ENCODE measurements at regions of chr12 and their contacts with region 1.

Region 1: DNA sequence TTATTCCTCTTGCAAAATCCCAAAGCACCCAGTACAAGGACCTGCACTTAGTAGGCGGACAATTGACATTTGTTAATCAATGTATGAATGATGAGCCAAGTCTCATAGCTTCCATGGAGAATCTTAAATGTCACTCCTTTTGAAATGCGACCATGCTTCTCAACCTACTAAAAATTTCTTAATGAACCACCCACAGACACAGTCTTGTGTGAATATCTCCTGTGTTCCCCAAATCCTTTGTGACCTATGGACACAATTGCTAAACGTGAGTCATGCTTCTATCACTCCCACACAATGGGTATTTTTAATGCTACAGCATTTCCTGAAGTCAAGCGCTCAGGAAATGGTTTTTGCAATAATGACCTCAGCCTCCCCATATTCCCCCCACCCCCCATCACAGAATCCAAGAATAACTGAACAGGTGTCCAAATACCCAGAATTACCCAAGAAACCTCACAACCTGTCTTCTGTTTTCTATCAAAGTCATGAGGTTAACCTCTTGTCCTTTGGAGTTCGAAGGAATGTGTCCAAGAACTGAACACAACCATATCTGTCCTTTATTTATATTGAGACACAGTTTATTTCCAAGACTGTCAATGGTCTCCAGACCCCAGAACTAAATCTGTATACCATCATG is 163.6 kb upstream of the PLEKHG7 start:
- DNase-seq: peak; percentile 56
- H3K4me3 Mint-ChIP-seq: no peak overlapping the region
- H3K27ac Mint-ChIP-seq: peak overlapping the region; percentile 90
- H3K4me1 Mint-ChIP-seq: peaks cover 63% of the 10 kb centered on the region
- H3K27me3 Mint-ChIP-seq: no peaks in the 10 kb centered on the region

Region 2: DNA sequence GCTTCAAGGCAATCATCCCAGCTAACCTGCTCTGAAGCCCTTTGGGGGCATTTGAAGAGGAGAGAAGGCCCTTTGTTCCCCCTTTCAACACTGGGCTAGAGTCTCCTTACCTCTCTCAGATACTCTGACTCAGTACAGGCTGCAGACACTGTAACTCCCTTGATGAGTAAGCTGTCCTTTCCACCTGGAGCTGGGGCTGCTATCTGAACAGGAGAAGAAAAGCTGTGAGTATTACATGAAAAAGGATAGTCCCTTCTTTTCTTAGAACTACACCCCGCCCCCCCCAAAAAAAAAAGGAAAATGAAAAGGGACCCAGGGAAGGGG is 23.0 kb before region 1 on chr12:
- CTCF ChIA-PET with region 1: no interaction called
- POLR2A ChIA-PET with region 1: no interaction called
- intact Hi-C with region 1: loop called (anchors 2 kb)
- DNase-seq: peak; percentile 55
- H3K4me3 Mint-ChIP-seq: peak overlapping the region; percentile 17
- H3K27ac Mint-ChIP-seq: peak overlapping the region; percentile 84
- H3K4me1 Mint-ChIP-seq: peaks cover 28% of the 10 kb centered on the region
- H3K27me3 Mint-ChIP-seq: no peaks in the 10 kb centered on the region

Region 3: GRCh38 chr12:92551853-92552397 is 12.7 kb after region 1 on chr12:
- CTCF ChIA-PET with region 1: interaction called, 8 read pairs
- POLR2A ChIA-PET with region 1: interaction called, 3 read pairs
- intact Hi-C with region 1: loop called (anchors 1 kb)
- DNase-seq: peak; percentile 75
- H3K4me3 Mint-ChIP-seq: no peak overlapping the region
- H3K27ac Mint-ChIP-seq: no peak overlapping the region
- H3K4me1 Mint-ChIP-seq: peaks cover 25% of the 10 kb centered on the region
- H3K27me3 Mint-ChIP-seq: no peaks in the 10 kb centered on the region

Region 4: DNA sequence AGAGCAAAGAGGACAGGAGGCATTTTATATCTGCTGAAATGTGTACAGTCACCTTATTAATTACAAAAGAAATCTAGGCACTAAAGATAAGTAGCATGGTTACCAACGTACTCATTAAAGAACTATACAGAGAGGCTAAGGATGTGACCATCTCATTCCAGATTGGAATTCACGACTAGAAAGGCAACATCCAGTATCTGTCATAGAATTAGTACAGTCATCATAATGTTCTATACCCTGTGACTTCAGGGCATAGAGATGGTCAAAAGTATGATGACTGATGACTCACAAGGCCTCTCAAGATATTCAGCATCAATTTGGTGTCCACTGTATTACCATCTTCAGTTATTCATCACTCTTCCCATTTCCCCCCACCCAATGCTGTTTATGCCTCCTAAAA is 19.6 kb after region 1 on chr12:
- CTCF ChIA-PET with region 1: no interaction called
- POLR2A ChIA-PET with region 1: interaction called, 3 read pairs
- intact Hi-C with region 1: loop called (anchors 1 kb)
- DNase-seq: no peak
- H3K4me3 Mint-ChIP-seq: peak overlapping the region; percentile 65
- H3K27ac Mint-ChIP-seq: no peak overlapping the region
- H3K4me1 Mint-ChIP-seq: peaks cover 69% of the 10 kb centered on the region
- H3K27me3 Mint-ChIP-seq: no peaks in the 10 kb centered on the region